ENCODE measurements at regions of chr16 and their contacts with region 1.

Region 1: GRCh38 chr16:73095885-73096421 is 48.0 kb upstream of the ZFHX3 start:
- DNase-seq: peak; percentile 44
- H3K4me3 ChIP-seq: no peak overlapping the region
- H3K27ac ChIP-seq: no peak overlapping the region
- H3K4me1 ChIP-seq: peaks cover 27% of the 10 kb centered on the region
- H3K27me3 ChIP-seq: peaks cover 3 to 4% of the 10 kb centered on the region in 2 experiments
- CTCF ChIP-seq: no peak
- POLR2A ChIP-seq: no peak

Region 2: GRCh38 chr16:73106326-73106725 is 10.4 kb after region 1 on chr16:
- CTCF ChIA-PET with region 1: interaction called, 11 read pairs
- POLR2A ChIA-PET with region 1: no interaction called
- dilution Hi-C with region 1: no loop called
- intact Hi-C with region 1: no loop called
- DNase-seq: no peak
- H3K4me3 ChIP-seq: no peak overlapping the region
- H3K27ac ChIP-seq: no peak overlapping the region
- H3K4me1 ChIP-seq: no peaks in the 10 kb centered on the region
- H3K27me3 ChIP-seq: no peaks in the 10 kb centered on the region
- CTCF ChIP-seq: no peak
- POLR2A ChIP-seq: no peak

Region 3: DNA sequence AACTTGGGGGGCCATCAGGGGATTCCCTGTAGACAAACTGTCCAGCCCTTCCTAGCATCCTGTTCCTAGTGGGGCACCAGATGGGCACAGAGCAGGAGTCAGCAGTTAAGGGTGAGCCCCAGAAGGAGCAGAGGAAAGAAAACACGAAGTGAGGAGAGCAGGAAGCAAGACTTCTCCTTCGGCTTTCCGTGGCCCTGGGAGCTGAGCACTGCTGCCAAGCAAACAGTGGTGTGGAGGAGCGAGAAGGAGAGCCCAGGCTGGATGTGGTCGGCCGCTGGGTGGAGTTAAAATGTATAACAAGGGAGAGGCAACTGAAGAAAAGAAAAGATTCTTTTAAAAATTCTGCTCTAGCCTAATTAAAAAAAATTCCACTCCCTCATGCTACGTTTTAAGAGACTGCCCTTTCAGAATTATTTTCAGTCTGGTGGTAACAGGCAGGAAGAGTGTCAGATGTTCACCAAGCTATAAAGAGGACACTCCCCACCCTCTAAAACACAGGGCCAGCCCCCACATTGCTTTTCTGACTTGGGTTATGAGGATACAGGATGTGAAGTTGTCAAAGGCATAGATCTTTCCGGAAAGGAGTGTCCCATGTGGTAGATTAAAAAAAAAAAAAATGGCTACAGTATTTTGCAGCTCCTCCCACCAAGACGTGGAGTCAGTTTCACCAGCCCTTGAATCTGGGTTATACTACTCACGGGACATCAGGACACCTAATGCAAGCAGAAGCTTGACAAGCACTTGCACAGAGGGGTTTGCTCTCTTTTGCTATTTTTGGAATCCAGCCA is 26.8 kb after region 1 on chr16:
- CTCF ChIA-PET with region 1: interaction called, 5 read pairs
- POLR2A ChIA-PET with region 1: no interaction called
- dilution Hi-C with region 1: no loop called
- intact Hi-C with region 1: loop called (anchors 2 kb)
- DNase-seq: peak; percentile 24
- H3K4me3 ChIP-seq: no peak overlapping the region
- H3K27ac ChIP-seq: no peak overlapping the region
- H3K4me1 ChIP-seq: peaks cover 5% of the 10 kb centered on the region
- H3K27me3 ChIP-seq: no peaks in the 10 kb centered on the region
- CTCF ChIP-seq: no peak
- POLR2A ChIP-seq: no peak

Region 4: DNA sequence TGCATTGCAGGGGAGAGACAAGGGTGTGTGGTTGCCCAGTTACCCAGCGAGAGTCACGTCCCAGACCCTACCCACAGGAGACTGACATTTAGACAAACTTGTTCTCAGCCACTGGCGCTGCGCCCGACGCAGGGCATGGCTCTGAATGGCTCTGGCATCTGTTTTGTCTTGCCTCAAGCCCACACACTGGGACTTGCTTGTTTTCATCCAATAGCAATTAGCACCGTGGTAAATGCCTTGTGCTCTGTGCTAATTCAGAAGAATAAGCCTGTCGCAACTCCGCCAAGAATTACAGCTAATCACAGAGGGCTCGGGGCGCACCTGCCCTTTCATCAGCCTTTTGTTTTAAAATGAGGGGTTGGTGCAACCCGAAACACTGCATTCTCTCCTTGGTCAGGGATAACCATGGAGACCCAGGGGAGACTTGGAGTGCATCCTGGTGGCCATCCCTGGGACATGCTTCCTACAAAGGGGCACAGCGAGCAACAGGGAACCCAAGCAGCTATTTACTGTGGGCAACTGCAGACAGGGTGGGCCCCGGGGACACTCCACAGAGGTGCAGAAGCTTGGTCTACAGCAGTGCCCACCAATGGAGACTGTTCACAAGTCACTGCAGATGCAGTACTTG is 172.5 kb after region 1 on chr16:
- CTCF ChIA-PET with region 1: no interaction called
- POLR2A ChIA-PET with region 1: no interaction called
- dilution Hi-C with region 1: no loop called
- intact Hi-C with region 1: no loop called
- DNase-seq: no peak
- H3K4me3 ChIP-seq: no peak overlapping the region
- H3K27ac ChIP-seq: no peak overlapping the region
- H3K4me1 ChIP-seq: no peaks in the 10 kb centered on the region
- H3K27me3 ChIP-seq: no peaks in the 10 kb centered on the region
- CTCF ChIP-seq: peak in 1 of 2 donors; percentile 5
- POLR2A ChIP-seq: no peak

Measured in endothelial cell of umbilical vein (primary cell).